ENCODE measurements at regions of chr1 and their contacts with region 1.

Region 1: GRCh38 chr1:189958756-189959155 is 518.9 kb downstream of the BRINP3 start:
- DNase-seq: no peak
- H3K4me3 ChIP-seq: no peak overlapping the region
- H3K27ac ChIP-seq: no peak overlapping the region
- H3K4me1 ChIP-seq: no peaks in the 10 kb centered on the region
- H3K27me3 ChIP-seq: no peaks in the 10 kb centered on the region
- CTCF ChIP-seq: no peak

Region 2: GRCh38 chr1:190029441-190029840 is 70.7 kb after region 1 on chr1:
- CTCF ChIA-PET with region 1: no interaction called
- dilution Hi-C with region 1: loop called (anchors 5 kb)
- in situ Hi-C with region 1: no loop called
- intact Hi-C with region 1: no loop called
- DNase-seq: no peak
- H3K4me3 ChIP-seq: no peak overlapping the region
- H3K27ac ChIP-seq: no peak overlapping the region
- H3K4me1 ChIP-seq: no peaks in the 10 kb centered on the region
- H3K27me3 ChIP-seq: no peaks in the 10 kb centered on the region
- CTCF ChIP-seq: no peak

Region 3: GRCh38 chr1:191043066-191043465 is 1084.3 kb after region 1 on chr1:
- CTCF ChIA-PET with region 1: no interaction called
- dilution Hi-C with region 1: no loop called
- in situ Hi-C with region 1: no loop called
- intact Hi-C with region 1: no loop called
- DNase-seq: no peak
- H3K4me3 ChIP-seq: no peak overlapping the region
- H3K27ac ChIP-seq: no peak overlapping the region
- H3K4me1 ChIP-seq: no peaks in the 10 kb centered on the region
- H3K27me3 ChIP-seq: no peaks in the 10 kb centered on the region
- CTCF ChIP-seq: no peak

Measured in mammary epithelial cell (primary cell).